B cell (primary cell): ENCODE measurements at regions of chr10 and their contacts with region 1.

Region 1: GRCh38 chr10:30722956-30723620 is 93.5 kb upstream of the LYZL2 start:
- DNase-seq: no peak
- ATAC-seq: peak; percentile 11
- H3K4me3 ChIP-seq: no peak overlapping the region
- H3K4me3 Mint-ChIP-seq: no peak overlapping the region
- H3K27ac ChIP-seq: no peak overlapping the region
- H3K27ac Mint-ChIP-seq: no peak overlapping the region
- H3K4me1 ChIP-seq: peaks cover 6 to 7% of the 10 kb centered on the region in 2 donors
- H3K4me1 Mint-ChIP-seq: peaks cover 19% of the 10 kb centered on the region
- H3K27me3 ChIP-seq: peaks cover 0 to 20% (median 3%) of the 10 kb centered on the region in 4 experiments
- H3K27me3 Mint-ChIP-seq: peaks cover 43% of the 10 kb centered on the region
- CTCF ChIP-seq: no peak

Region 2: GRCh38 chr10:30671026-30671616 is 52.0 kb before region 1 on chr10:
- CTCF ChIA-PET with region 1: interaction called, 18 read pairs
- POLR2A ChIA-PET with region 1: no interaction called
- intact Hi-C with region 1: loop called (anchors 1 kb)
- DNase-seq: peak; percentile 72
- ATAC-seq: peak; percentile 53
- H3K4me3 ChIP-seq: peak overlapping the region in 2 of 5 experiments; percentile 17 to 54
- H3K4me3 Mint-ChIP-seq: peak overlapping the region; percentile 44
- H3K27ac ChIP-seq: no peak overlapping the region
- H3K27ac Mint-ChIP-seq: no peak overlapping the region
- H3K4me1 ChIP-seq: peaks cover 0 to 3% of the 10 kb centered on the region in 2 donors
- H3K4me1 Mint-ChIP-seq: peaks cover 5% of the 10 kb centered on the region
- H3K27me3 ChIP-seq: peaks cover 0 to 15% (median 6%) of the 10 kb centered on the region in 4 experiments
- H3K27me3 Mint-ChIP-seq: peaks cover 25% of the 10 kb centered on the region
- CTCF ChIP-seq: peak; percentile 85

Region 3: GRCh38 chr10:30687698-30688219 is 35.3 kb before region 1 on chr10:
- CTCF ChIA-PET with region 1: interaction called, 95 read pairs
- POLR2A ChIA-PET with region 1: no interaction called
- intact Hi-C with region 1: loop called (anchors 1 kb)
- DNase-seq: peak; percentile 72
- ATAC-seq: peak; percentile 67
- H3K4me3 ChIP-seq: no peak overlapping the region
- H3K4me3 Mint-ChIP-seq: no peak overlapping the region
- H3K27ac ChIP-seq: no peak overlapping the region
- H3K27ac Mint-ChIP-seq: no peak overlapping the region
- H3K4me1 ChIP-seq: peaks cover 0 to 3% of the 10 kb centered on the region in 2 donors
- H3K4me1 Mint-ChIP-seq: no peaks in the 10 kb centered on the region
- H3K27me3 ChIP-seq: peaks cover 0 to 18% (median 9%) of the 10 kb centered on the region in 4 experiments
- H3K27me3 Mint-ChIP-seq: peaks cover 41% of the 10 kb centered on the region
- CTCF ChIP-seq: peak; percentile 98

Region 4: DNA sequence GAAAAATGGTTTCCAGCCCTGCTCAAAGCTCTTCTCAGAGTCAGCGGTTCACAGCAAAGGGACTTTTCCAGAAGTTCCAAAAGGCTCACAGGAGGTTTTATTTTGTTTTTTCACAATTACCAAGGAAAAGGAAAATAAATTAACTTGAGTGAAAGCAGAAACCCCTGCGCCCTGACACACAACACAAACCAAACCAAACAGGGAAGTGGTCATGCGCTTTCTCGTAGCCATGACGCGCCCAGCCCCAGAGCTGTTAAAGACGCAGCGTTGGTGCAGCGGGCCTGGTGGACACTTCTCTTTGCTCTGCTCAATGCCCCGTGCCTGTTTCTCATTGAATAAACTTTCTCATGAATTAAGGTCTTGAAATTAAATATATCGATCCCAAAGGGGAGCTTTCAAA is 40.8 kb after region 1 on chr10:
- CTCF ChIA-PET with region 1: no interaction called
- POLR2A ChIA-PET with region 1: no interaction called
- intact Hi-C with region 1: no loop called
- DNase-seq: no peak
- ATAC-seq: no peak
- H3K4me3 ChIP-seq: no peak overlapping the region
- H3K4me3 Mint-ChIP-seq: no peak overlapping the region
- H3K27ac ChIP-seq: no peak overlapping the region
- H3K27ac Mint-ChIP-seq: no peak overlapping the region
- H3K4me1 ChIP-seq: no peaks in the 10 kb centered on the region
- H3K4me1 Mint-ChIP-seq: no peaks in the 10 kb centered on the region
- H3K27me3 ChIP-seq: no peaks in the 10 kb centered on the region
- H3K27me3 Mint-ChIP-seq: no peaks in the 10 kb centered on the region
- CTCF ChIP-seq: no peak

Region 5: DNA sequence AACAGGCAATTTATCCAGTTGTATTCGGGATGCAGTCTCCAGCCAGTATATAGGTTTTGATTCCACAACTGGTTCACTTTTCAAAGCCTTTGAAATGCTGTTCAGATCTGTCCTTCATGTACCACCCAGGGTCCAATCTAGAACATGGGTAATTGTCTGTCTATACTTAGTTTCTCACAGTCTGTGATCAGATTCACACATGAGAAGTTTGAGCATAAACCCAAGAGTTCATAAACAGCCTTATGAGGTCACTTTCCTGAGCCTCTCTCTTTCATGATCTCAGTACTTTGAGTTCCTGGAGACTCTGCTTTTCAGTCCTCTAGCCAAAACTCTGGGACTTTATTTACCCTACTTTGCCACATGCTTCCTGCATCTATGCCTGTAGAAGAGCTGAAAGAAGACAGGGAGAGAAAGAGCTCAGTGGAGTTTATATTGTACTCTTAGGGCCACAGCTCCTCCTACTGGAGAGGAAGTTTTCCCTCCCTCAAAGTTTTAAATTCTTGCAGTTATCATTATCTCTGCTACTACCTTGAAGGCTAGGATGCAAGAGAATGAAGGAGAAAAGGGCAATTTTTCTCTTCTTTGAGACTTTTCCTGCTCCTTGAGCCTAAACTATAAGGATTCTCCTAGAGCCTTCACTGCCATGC is 767.9 kb after region 1 on chr10:
- CTCF ChIA-PET with region 1: no interaction called
- POLR2A ChIA-PET with region 1: no interaction called
- intact Hi-C with region 1: loop called (anchors 2 kb)
- DNase-seq: peak; percentile 40
- ATAC-seq: no peak
- H3K4me3 ChIP-seq: no peak overlapping the region
- H3K4me3 Mint-ChIP-seq: no peak overlapping the region
- H3K27ac ChIP-seq: no peak overlapping the region
- H3K27ac Mint-ChIP-seq: no peak overlapping the region
- H3K4me1 ChIP-seq: no peaks in the 10 kb centered on the region
- H3K4me1 Mint-ChIP-seq: no peaks in the 10 kb centered on the region
- H3K27me3 ChIP-seq: no peaks in the 10 kb centered on the region
- H3K27me3 Mint-ChIP-seq: no peaks in the 10 kb centered on the region
- CTCF ChIP-seq: peak; percentile 51

Region 6: DNA sequence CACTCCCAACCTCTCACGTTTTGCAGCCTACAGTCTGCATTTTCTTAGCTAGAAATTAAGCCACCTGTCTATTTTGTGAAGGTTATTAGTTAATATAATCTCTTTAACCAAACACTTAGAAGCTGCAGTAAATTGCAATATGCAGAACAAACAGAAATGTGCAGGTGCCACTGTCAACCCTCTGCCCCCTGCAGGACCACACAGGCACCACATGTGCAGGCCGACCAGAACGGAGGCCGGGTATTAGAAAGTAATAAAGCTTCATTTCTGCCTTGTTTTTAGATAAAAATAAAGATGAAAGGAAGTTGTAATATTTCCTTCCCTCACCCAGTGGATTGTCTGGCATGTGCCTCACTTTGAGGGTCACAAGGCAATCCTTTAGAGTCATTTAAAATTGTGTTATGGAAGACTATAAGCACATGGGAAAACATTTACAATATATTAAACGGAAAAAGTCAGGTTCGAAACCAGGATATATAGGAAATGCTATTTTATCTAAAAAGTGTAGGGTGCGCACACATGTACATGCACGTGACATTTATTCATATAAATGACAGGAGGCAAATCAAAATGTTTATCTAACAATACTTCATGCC is 1047.3 kb after region 1 on chr10:
- CTCF ChIA-PET with region 1: interaction called, 8 read pairs
- POLR2A ChIA-PET with region 1: no interaction called
- intact Hi-C with region 1: loop called (anchors 1 kb)
- DNase-seq: peak; percentile 61
- ATAC-seq: peak; percentile 94
- H3K4me3 ChIP-seq: no peak overlapping the region
- H3K4me3 Mint-ChIP-seq: no peak overlapping the region
- H3K27ac ChIP-seq: no peak overlapping the region
- H3K27ac Mint-ChIP-seq: no peak overlapping the region
- H3K4me1 ChIP-seq: no peaks in the 10 kb centered on the region
- H3K4me1 Mint-ChIP-seq: no peaks in the 10 kb centered on the region
- H3K27me3 ChIP-seq: no peaks in the 10 kb centered on the region
- H3K27me3 Mint-ChIP-seq: no peaks in the 10 kb centered on the region
- CTCF ChIP-seq: peak; percentile 95